ENCODE measurements at regions of chr9 and their contacts with region 1.

Region 1: GRCh38 chr9:126704873-126705766 is 91.4 kb downstream of the LMX1B start:
- DNase-seq: peak; percentile 91
- ATAC-seq: peak; percentile 64
- H3K4me3 Mint-ChIP-seq: peak overlapping the region; percentile 53
- H3K27ac Mint-ChIP-seq: peak overlapping the region; percentile 2
- H3K4me1 Mint-ChIP-seq: peaks cover 11% of the 10 kb centered on the region
- H3K27me3 Mint-ChIP-seq: peaks cover 28% of the 10 kb centered on the region

Region 2: DNA sequence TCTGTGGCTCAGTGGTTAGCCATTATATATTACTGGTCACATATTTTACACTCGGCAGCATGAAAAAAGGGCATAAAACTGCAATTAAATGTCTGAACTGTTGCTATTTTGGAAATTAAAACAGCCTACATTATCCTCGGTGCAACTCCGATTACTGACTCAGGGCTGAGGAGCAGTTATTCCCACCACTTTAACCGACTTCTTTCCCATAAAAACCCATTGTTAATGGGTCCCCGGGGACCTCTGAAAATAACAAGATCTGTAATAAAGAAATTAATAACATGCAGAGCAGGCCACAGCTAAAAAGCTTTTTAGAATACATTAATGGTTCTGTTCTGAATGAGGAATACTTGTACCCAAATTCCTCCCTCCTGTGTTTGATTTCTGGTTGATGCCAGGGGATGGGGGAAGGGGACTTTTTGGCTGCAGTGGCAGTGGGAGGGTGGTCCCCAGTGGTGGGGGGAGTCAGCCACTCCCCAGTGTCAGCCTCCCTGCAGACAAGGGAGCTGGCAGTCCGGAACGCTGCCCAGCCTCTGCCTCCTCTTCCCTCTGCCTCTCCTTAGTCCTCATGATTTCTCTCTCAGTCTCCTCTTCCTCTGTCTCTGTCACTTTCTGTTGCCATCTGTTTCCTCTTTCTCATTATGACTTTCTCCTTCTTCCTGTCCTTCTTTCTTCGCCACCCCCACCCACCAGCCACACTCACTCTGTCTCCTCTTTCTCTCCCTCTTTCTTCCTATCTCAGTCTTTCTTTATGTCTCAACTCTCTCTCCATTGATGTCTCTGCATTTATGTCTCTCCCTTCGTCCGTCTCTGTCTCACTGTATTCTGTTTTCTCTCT is 40.7 kb after region 1 on chr9:
- POLR2A ChIA-PET with region 1: no interaction called
- DNase-seq: no peak
- ATAC-seq: peak; percentile 61
- H3K4me3 Mint-ChIP-seq: peak overlapping the region; percentile 63
- H3K27ac Mint-ChIP-seq: peak overlapping the region; percentile 92
- H3K4me1 Mint-ChIP-seq: peaks cover 39% of the 10 kb centered on the region
- H3K27me3 Mint-ChIP-seq: peaks cover 10% of the 10 kb centered on the region

Region 3: GRCh38 chr9:126781186-126782052 is 76.3 kb after region 1 on chr9:
- POLR2A ChIA-PET with region 1: interaction called, 20 read pairs
- DNase-seq: peak; percentile 85
- ATAC-seq: peak; percentile 83
- H3K4me3 Mint-ChIP-seq: no peak overlapping the region
- H3K27ac Mint-ChIP-seq: no peak overlapping the region
- H3K4me1 Mint-ChIP-seq: no peaks in the 10 kb centered on the region
- H3K27me3 Mint-ChIP-seq: peaks cover 15% of the 10 kb centered on the region

Measured in activated naive CD8-positive, alpha-beta T cell treated with anti-CD3 and anti-CD28 coated beads, Interleukin-2, amount 10 ng/mL, durations not matched to agents 7 days and 5 days (primary cell).